Activated B cell treated with CpG ODN at 0.5 μM for 24 hours (primary cell): ENCODE measurements at regions of chr19 and their contacts with region 1.

Region 1: DNA sequence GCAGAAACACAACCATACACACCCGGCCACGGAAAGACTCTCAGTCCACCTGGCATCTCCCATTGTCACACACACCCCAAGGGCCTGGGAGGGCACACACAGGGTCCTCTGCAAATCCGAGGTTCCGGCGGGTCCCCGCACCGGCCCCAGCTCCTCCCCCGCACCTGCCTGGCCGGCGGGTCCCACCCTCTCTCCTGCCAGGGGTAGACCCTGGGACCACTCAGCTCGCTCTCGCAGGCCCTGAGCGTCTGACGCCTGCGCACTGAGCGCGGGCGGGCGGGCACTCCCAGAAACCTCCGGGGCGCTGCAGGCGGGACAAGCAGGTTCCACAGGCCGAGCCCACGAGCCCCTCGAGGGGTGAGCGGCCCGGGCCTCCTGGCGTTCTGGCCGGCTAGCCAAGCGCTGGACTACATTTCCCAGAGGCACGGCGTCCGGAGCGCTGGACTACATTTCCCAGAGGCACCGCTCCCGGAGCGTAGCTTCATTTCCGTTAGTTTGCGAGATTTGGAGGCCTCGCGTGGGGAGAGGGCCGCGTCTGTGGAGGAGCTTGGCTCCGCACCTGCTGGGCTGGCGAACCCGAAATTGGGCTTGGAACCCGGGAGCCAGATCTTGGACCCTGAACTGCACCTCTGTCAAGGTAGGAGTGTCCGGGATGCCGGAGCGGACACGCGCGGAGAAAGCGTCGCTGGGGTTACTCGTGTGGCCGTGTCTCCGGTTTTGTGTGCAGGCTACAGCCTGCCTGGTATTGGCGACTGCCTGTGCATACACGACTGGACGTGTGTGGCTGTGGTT is at the start of gene ZNF420:
- DNase-seq: peak; percentile 83
- ATAC-seq: peak; percentile 96
- H3K4me3 Mint-ChIP-seq: peak within 1 kb of the TSS; percentile 97
- H3K27ac Mint-ChIP-seq: peak within 1 kb of the TSS; percentile 92
- H3K4me1 Mint-ChIP-seq: peaks cover 32% of the 10 kb centered on the region
- H3K27me3 Mint-ChIP-seq: no peaks in the 10 kb centered on the region
- CTCF ChIP-seq: no peak
- total RNA-seq, gene ZNF420: 11.6 and 11.9 TPM in 2 replicates

Region 2: DNA sequence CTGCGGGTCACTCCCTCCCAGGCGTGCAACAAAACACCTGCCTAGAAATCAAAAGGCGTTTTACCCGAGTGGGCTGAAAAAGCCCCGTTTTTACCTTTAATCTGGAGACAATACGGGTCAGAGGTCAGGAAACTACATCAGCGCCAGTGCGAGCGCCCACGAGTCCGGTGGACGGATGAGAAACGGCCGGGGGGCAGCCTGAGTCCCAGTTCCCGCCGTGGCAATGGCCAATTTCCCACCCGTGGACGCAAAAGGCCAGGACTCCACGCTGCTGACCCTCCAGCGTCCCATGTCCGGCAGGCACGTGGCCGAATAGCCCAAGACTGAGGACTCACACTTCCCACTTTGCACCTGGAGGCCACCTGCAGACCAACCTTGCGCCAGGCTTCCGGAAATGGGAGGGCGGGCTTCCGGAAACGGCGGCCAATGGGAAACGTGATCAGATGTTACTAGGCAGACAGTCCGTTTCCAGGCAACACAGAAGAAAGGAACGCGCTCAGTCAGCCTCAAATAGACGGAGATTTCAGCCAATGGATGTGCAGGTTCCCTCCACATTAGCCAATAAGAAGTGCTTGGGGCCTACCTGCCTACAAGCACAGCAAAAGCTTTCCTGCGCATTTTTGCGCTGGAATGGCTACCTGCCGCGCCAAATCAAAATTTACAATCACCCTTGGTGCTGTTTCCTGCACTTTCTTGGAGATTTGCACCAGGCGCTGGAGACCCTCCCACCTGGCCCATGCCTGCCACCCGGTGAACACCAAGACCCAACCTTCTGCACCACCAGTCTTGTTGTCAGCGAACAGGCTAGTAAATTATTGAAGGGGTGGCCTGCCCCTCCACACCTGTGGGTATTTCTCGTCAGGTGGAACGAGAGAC is 746.5 kb before region 1 on chr19:
- CTCF ChIA-PET with region 1: no interaction called
- POLR2A ChIA-PET with region 1: no interaction called
- intact Hi-C with region 1: loop called (anchors 5 kb)
- DNase-seq: peak; percentile 78
- ATAC-seq: peak; percentile 99
- H3K4me3 Mint-ChIP-seq: peak overlapping the region; percentile 86
- H3K27ac Mint-ChIP-seq: peak overlapping the region; percentile 76
- H3K4me1 Mint-ChIP-seq: peaks cover 26% of the 10 kb centered on the region
- H3K27me3 Mint-ChIP-seq: no peaks in the 10 kb centered on the region
- CTCF ChIP-seq: no peak

Region 3: GRCh38 chr19:36528194-36528920 is 549.8 kb before region 1 on chr19 and contains the start of gene ZNF260:
- CTCF ChIA-PET with region 1: no interaction called
- POLR2A ChIA-PET with region 1: interaction called, 7 read pairs
- intact Hi-C with region 1: loop called (anchors 1 kb)
- DNase-seq: peak; percentile 94
- ATAC-seq: peak; percentile 89
- H3K4me3 Mint-ChIP-seq: peak within 1 kb of the TSS; percentile 99
- H3K27ac Mint-ChIP-seq: peak within 1 kb of the TSS; percentile 99
- H3K4me1 Mint-ChIP-seq: peaks cover 27% of the 10 kb centered on the region
- H3K27me3 Mint-ChIP-seq: no peaks in the 10 kb centered on the region
- CTCF ChIP-seq: no peak
- total RNA-seq, gene ZNF260: 9.8 and 13.6 TPM in 2 replicates

Region 4: DNA sequence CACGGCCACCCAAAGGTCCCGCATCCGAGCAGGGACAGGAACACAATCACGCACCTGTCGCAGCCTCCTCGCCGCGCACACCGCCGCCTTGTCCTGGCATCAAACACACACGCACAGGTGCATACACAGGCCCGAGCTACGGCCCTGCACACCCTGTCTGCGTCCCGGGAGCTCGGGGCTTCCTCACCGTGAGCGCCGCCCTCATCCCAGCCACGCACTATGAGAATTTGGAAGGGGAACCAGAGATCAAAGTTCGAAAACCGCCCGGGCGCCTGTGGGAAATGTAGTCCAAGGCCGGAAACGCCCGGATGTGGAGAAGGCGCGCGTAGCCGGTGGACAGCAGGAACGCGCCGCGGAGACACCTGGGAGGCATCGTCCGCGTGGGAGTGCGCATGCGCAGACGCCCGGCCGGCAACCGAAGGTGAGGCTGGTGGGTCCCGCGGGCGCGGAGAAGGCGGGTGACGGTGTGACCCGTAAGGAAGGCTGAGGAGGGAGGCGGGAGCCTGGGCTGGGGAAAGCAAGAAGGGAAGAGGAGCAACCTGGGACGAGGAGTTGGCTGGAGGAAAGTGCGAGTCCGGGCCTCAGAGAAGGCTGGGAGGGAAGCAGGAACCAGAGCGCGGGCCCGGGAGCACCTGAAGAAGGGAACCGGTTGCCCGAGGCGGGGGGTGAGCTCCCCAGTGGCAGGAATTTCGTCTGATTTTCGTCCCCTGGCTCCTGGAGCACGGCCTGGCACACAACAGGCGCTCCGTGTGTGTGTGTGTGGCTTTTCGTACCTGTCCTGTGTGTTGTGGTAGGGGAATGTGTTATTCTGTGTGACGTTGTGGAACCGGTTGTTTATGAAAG is 390.7 kb before region 1 on chr19 and contains the start of gene ZNF567:
- CTCF ChIA-PET with region 1: no interaction called
- POLR2A ChIA-PET with region 1: no interaction called
- intact Hi-C with region 1: loop called (anchors 2 kb)
- DNase-seq: peak; percentile 95
- ATAC-seq: peak; percentile 93
- H3K4me3 Mint-ChIP-seq: peak within 1 kb of the TSS; percentile 98
- H3K27ac Mint-ChIP-seq: peak within 1 kb of the TSS; percentile 89
- H3K4me1 Mint-ChIP-seq: peaks cover 34% of the 10 kb centered on the region
- H3K27me3 Mint-ChIP-seq: no peaks in the 10 kb centered on the region
- CTCF ChIP-seq: no peak
- total RNA-seq, gene ZNF567: 13.3 and 15.0 TPM in 2 replicates

Region 5: GRCh38 chr19:36850559-36851442 is 227.3 kb before region 1 on chr19 and contains the start of gene ZNF345:
- CTCF ChIA-PET with region 1: no interaction called
- POLR2A ChIA-PET with region 1: interaction called, 13 read pairs
- intact Hi-C with region 1: loop called (anchors 1 kb)
- DNase-seq: peak; percentile 71
- ATAC-seq: peak; percentile 83
- H3K4me3 Mint-ChIP-seq: no peak within 1 kb of the TSS
- H3K27ac Mint-ChIP-seq: no peak within 1 kb of the TSS
- H3K4me1 Mint-ChIP-seq: peaks cover 9% of the 10 kb centered on the region
- H3K27me3 Mint-ChIP-seq: no peaks in the 10 kb centered on the region
- CTCF ChIP-seq: no peak
- total RNA-seq, gene ZNF345: 7.8 and 9.5 TPM in 2 replicates

Region 6: DNA sequence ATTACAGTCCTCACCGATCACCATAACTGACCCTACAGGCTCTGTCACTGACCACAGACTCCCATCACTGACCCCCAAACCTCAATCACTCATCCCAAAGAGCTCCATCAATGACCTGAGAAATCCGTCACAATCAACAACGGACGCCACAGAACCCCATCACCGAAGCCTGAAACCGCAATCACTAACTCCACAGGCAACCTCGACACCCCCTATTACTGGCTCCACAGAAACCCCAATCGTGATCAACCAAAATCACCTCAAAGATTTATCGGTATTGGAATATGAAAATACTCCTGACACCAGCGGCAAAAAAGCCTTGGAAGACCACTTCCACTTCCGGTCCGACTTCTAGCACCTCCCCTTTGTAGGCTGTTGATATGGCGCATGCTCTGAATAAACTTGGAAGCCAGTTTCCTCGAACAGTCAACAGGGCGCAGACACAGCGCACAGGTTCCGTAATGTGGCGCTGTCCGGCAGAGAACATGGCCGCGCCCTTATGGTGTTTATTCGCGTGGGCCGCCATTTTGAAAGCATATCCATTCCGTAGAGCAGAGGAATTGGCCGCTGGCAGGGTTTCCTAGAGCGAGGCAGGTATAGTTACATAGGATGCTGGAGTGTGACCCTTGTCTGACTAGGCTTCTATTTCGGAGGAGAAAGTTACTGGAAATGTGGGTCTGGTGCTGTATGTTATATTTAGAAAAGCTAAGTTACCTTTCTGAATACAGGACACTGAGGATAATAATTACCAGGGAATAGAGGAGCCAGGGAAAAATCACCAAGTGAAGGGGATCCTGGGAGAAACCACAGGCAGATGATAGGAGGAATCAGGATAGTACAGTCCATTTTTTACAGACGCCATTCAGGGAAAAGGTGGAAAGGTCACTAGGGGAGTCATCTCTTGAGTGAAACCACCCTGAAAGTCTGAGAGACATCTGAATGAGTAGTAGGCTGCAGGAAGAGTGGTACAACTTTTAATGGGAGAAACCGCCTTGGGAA is 94.5 kb after region 1 on chr19 and contains the start of gene ZNF585A:
- CTCF ChIA-PET with region 1: no interaction called
- POLR2A ChIA-PET with region 1: interaction called, 4 read pairs
- intact Hi-C with region 1: loop called (anchors 1 kb)
- DNase-seq: peak; percentile 77
- ATAC-seq: peak; percentile 99
- H3K4me3 Mint-ChIP-seq: peak within 1 kb of the TSS; percentile 52
- H3K27ac Mint-ChIP-seq: no peak within 1 kb of the TSS
- H3K4me1 Mint-ChIP-seq: peaks cover 4% of the 10 kb centered on the region
- H3K27me3 Mint-ChIP-seq: no peaks in the 10 kb centered on the region
- CTCF ChIP-seq: no peak
- total RNA-seq, gene ZNF585A: 14.4 and 17.0 TPM in 2 replicates

Region 7: GRCh38 chr19:37506387-37507166 is 428.4 kb after region 1 on chr19 and contains the start of gene ZNF793:
- CTCF ChIA-PET with region 1: no interaction called
- POLR2A ChIA-PET with region 1: interaction called, 11 read pairs
- intact Hi-C with region 1: loop called (anchors 2 kb)
- DNase-seq: peak; percentile 70
- ATAC-seq: peak; percentile 87
- H3K4me3 Mint-ChIP-seq: no peak within 1 kb of the TSS
- H3K27ac Mint-ChIP-seq: no peak within 1 kb of the TSS
- H3K4me1 Mint-ChIP-seq: peaks cover 2% of the 10 kb centered on the region
- H3K27me3 Mint-ChIP-seq: no peaks in the 10 kb centered on the region
- CTCF ChIP-seq: no peak
- total RNA-seq, gene ZNF793: 8.4 and 8.7 TPM in 2 replicates